ENCODE measurements at regions of chr4 and their contacts with region 1.

Region 1: GRCh38 chr4:155953151-155954114 is at the start of gene CTSO:
- DNase-seq: peak; percentile 67 to 73
- H3K4me3 ChIP-seq: peak within 1 kb of the TSS; percentile 47 to 93 (median 81)
- H3K27ac ChIP-seq: peak within 1 kb of the TSS; percentile 95 to 100 (median 100)
- H3K4me1 ChIP-seq: peaks cover 0 to 3% of the 10 kb centered on the region in 2 donors
- H3K27me3 ChIP-seq: no peaks in the 10 kb centered on the region
- CTCF ChIP-seq: peak in 5 of 6 experiments; percentile 18 to 72 (median 48)
- POLR2A ChIP-seq: peak in 1 of 2 donors; percentile 67
- total RNA-seq, gene CTSO: 31.9 to 36.3 (median 35.6) TPM

Region 2: GRCh38 chr4:155809835-155810234 is 143.6 kb before region 1 on chr4:
- intact Hi-C with region 1: loop called (anchors 10 kb)
- DNase-seq: no peak
- H3K4me3 ChIP-seq: no peak overlapping the region
- H3K27ac ChIP-seq: no peak overlapping the region
- H3K4me1 ChIP-seq: peaks cover 0 to 7% of the 10 kb centered on the region in 2 donors
- H3K27me3 ChIP-seq: no peaks in the 10 kb centered on the region
- CTCF ChIP-seq: peak in 5 of 6 experiments; percentile 40 to 78 (median 58)
- POLR2A ChIP-seq: no peak

Region 3: DNA sequence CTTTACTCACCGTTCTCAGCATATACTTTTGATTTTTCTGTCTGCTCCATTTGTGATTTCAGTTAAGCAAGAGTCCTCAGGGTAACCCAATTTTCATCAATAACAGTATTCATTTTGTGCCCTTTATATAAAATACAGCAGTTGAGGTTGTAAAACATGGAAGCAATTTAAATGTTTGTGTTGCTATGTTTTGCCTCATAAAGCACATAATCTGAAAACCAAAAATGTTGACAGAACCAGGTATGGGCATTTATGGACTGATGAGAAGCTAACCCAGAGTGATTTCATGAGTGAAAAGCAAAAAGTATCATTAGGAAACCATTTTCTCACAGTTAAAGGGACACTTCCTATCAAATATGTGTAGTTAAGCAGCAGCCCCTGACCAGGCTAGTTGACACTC is 87.3 kb before region 1 on chr4 and contains the start of gene ASIC5:
- intact Hi-C with region 1: no loop called
- DNase-seq: no peak
- H3K4me3 ChIP-seq: no peak within 1 kb of the TSS
- H3K27ac ChIP-seq: no peak within 1 kb of the TSS
- H3K4me1 ChIP-seq: no peaks in the 10 kb centered on the region
- H3K27me3 ChIP-seq: no peaks in the 10 kb centered on the region
- CTCF ChIP-seq: no peak
- POLR2A ChIP-seq: no peak
- total RNA-seq, gene ASIC5: not detected